Mammary epithelial cell (primary cell): ENCODE measurements at regions of chr18 and their contacts with region 1.

Region 1: DNA sequence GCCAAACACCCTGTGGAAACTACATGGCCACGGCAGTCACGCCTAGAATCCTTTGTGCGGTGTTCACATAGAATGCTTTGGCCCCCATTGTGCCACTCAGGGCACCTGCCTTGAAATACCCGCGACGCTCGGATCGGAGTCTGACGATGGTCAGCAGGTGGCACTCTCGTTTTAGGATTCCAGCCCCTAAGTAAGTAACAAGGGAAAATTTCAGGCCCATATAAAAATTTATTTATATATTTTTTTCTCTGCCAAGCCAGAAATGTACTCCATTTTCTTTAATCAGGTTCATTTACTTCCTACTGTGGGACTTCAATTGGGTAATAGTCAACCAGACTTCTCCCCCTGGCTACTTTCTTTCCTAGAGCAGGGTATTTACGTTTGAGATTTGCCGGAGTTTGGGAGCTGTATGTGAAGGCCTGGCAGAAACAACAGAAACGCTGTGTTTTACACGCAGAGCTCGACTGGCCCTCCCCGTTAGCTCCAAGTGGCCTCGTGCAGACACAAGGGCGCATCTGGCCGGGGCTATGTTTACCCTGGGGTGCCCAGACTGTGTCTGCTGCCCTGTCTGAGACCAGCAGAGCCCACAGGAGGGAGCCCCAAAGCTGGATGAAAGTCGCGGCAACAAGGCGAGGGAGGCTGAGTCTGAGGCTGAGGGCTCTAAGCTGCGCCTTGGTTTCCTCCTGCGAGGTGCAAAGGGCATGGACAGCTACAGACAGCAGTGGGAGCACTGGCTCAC is 41.6 kb downstream of the LRRC30 start:
- DNase-seq: peak; percentile 56
- H3K4me3 ChIP-seq: no peak overlapping the region
- H3K27ac ChIP-seq: no peak overlapping the region
- H3K4me1 ChIP-seq: peaks cover 5% of the 10 kb centered on the region
- H3K27me3 ChIP-seq: no peaks in the 10 kb centered on the region
- CTCF ChIP-seq: peak; percentile 55 to 73

Region 2: GRCh38 chr18:7066965-7067555 is 205.4 kb before region 1 on chr18:
- CTCF ChIA-PET with region 1: no interaction called
- dilution Hi-C with region 1: no loop called
- in situ Hi-C with region 1: no loop called
- intact Hi-C with region 1: no loop called
- DNase-seq: peak; percentile 52
- H3K4me3 ChIP-seq: no peak overlapping the region
- H3K27ac ChIP-seq: no peak overlapping the region
- H3K4me1 ChIP-seq: peaks cover 7% of the 10 kb centered on the region
- H3K27me3 ChIP-seq: no peaks in the 10 kb centered on the region
- CTCF ChIP-seq: no peak

Region 3: GRCh38 chr18:7317804-7318231 is 45.3 kb after region 1 on chr18:
- CTCF ChIA-PET with region 1: no interaction called
- dilution Hi-C with region 1: no loop called
- in situ Hi-C with region 1: no loop called
- intact Hi-C with region 1: no loop called
- DNase-seq: peak; percentile 88
- H3K4me3 ChIP-seq: no peak overlapping the region
- H3K27ac ChIP-seq: no peak overlapping the region
- H3K4me1 ChIP-seq: peaks cover 16% of the 10 kb centered on the region
- H3K27me3 ChIP-seq: no peaks in the 10 kb centered on the region
- CTCF ChIP-seq: no peak

Region 4: GRCh38 chr18:7349181-7349837 is 76.8 kb after region 1 on chr18:
- CTCF ChIA-PET with region 1: no interaction called
- dilution Hi-C with region 1: no loop called
- in situ Hi-C with region 1: no loop called
- intact Hi-C with region 1: loop called (anchors 1 kb)
- DNase-seq: no peak
- H3K4me3 ChIP-seq: no peak overlapping the region
- H3K27ac ChIP-seq: no peak overlapping the region
- H3K4me1 ChIP-seq: no peaks in the 10 kb centered on the region
- H3K27me3 ChIP-seq: no peaks in the 10 kb centered on the region
- CTCF ChIP-seq: peak in 1 of 2 donors; percentile 27

Region 5: DNA sequence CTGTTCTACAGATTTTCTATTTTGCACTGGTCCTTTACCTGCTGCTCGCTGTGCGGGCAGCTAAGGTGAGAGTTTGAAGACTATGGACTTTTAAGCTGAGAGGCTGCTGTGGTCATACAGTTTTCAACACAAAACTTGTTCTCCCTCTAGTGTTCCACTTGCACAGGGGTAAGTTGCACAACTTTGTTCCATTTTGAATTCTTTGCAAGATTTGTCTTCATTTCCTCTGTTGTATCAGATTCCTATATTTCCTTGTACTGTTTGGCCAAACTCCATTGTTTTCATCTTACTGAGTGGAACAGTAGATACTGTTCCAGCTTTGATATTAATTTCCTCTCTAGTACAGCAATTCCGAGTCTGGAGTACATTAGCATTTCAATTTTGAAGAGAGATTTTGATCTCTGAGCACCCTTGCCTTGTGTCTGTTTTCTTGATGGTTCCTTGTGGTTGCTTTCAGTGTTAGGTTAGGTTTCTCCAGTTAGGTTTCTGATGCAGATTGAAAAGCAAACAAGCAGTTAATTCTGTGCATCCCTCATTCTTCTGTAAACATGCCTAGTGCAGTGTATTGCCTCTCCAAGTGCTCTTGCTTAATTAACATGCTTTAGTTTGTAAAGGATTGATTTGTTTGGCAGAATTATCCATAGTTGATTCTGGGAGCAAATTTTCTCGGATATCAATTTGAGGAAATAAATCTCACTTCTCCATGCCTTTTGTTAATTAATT is 483.4 kb after region 1 on chr18:
- CTCF ChIA-PET with region 1: no interaction called
- dilution Hi-C with region 1: no loop called
- in situ Hi-C with region 1: loop called in 1 of 2 experiments (anchors 25 kb)
- intact Hi-C with region 1: loop called (anchors 1 kb)
- DNase-seq: no peak
- H3K4me3 ChIP-seq: no peak overlapping the region
- H3K27ac ChIP-seq: no peak overlapping the region
- H3K4me1 ChIP-seq: peaks cover 4% of the 10 kb centered on the region
- H3K27me3 ChIP-seq: no peaks in the 10 kb centered on the region
- CTCF ChIP-seq: peak in 1 of 2 donors; percentile 29

Region 6: DNA sequence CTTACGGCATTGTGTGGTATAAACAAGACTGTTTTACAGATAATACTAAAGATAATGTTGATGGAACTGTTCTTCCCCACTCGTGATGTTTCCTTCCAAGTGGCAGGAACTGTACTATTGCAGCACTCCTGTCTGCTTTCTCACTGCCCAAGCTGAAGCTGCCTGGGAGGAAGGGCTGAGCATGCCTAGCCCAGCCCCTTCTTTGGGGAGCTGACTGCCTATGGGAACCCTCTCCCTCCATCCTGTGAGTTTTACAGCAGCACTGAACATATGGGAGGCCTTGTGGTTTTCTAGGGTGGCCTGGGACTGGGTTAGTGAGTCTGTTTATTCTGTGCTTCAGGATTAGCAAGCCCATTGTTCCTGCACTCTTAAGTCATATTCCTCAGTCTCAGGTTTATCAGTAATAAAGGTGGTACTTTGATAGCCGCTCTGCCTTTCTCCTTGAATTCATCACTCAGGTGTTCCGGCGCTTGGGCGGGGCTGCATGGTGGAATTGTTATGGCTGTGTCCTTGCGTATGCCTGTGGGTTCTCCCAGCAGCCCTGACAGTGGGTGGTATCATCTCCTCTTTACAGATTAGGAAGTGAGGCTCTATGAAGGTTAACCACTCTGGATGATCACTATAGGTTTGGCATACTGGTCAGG is 674.4 kb after region 1 on chr18:
- CTCF ChIA-PET with region 1: no interaction called
- dilution Hi-C with region 1: no loop called
- in situ Hi-C with region 1: no loop called
- intact Hi-C with region 1: loop called (anchors 5 kb)
- DNase-seq: peak; percentile 71
- H3K4me3 ChIP-seq: peak overlapping the region; percentile 31 to 57 (median 34)
- H3K27ac ChIP-seq: peak overlapping the region; percentile 88
- H3K4me1 ChIP-seq: peaks cover 36% of the 10 kb centered on the region
- H3K27me3 ChIP-seq: no peaks in the 10 kb centered on the region
- CTCF ChIP-seq: no peak

Region 7: DNA sequence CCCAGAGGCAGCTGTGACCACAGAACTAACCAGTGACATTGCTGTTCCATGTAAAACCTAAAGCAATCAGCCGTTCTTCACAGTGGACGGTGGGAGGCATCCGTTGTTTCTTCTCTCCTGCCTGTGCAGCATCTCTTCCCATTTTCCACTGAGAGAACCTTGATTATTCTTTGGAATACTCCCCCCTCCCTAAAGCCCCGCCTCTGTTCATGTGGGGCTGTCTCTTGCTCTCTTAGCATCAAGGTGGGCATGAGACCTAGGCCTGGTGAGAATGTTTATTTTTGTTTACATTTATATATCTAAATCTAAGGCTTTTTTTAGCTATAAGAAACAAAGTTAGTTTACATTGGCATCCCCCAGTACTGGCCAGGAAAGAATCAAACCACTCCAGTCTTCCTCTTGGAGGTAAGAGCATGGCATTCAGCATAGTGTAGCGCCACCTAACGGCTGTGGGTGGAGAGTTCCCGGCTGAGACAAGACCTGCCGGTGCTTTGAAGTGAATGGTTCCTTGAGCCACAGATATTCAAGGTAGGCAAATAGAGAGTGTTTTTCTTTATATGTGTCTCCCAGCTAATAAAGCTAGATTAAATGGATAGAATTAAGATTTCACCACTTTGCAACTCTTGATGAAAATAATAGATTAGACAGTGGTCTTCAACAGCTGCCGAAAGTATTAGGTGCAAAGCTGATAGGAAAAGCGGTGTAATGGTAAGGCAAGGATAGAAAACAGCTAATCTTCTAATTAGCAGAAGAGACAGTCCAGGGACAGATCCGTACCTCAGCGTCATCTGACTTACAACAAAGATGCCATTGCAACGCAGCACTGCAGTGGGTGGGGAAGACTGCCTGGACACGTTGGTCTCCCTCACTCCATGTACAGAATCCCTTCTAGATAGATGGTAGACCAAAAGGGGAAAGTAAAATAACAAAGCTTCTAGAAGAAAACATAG is 1117.2 kb after region 1 on chr18:
- CTCF ChIA-PET with region 1: no interaction called
- dilution Hi-C with region 1: no loop called
- in situ Hi-C with region 1: no loop called
- intact Hi-C with region 1: loop called (anchors 5 kb)
- DNase-seq: peak; percentile 53
- H3K4me3 ChIP-seq: no peak overlapping the region
- H3K27ac ChIP-seq: no peak overlapping the region
- H3K4me1 ChIP-seq: no peaks in the 10 kb centered on the region
- H3K27me3 ChIP-seq: no peaks in the 10 kb centered on the region
- CTCF ChIP-seq: peak; percentile 92 to 96